ENCODE measurements at regions of chr1 and their contacts with region 1.

Region 1: DNA sequence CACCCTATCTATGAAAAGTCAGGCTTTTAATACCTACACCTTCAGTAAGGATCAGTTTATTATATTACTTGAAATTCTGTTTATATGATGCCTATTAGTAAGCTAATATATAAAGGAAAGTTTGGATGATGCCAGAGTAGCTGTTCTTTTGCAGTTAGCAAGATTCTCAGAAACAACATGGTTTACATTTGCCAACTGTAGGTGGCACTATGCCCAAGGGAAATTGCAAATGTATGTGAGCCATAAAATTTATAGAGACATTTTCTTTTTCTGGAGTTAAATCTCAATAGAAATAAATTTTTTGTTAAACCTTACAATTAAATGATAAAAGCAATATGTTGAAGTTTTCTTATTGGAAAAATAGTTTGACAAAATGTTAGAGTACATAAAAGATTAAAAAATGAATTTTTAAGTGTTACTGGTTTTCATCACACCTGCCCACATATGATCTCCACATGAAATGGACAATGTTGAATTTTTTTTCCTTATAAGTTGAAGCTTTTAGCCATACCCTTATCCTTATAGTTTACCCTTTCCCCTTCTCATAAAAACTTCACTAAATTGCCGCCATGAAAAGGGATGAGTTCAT is 32.1 kb upstream of the EPHX4 start:
- DNase-seq: peak; percentile 57
- ATAC-seq: peak; percentile 42
- H3K4me3 Mint-ChIP-seq: no peak overlapping the region
- H3K27ac Mint-ChIP-seq: no peak overlapping the region
- H3K4me1 Mint-ChIP-seq: no peaks in the 10 kb centered on the region
- H3K27me3 Mint-ChIP-seq: peaks cover 1% of the 10 kb centered on the region
- CTCF ChIP-seq: peak; percentile 68

Region 2: GRCh38 chr1:92016720-92017316 is 19.1 kb after region 1 on chr1:
- CTCF ChIA-PET with region 1: interaction called, 16 read pairs
- POLR2A ChIA-PET with region 1: no interaction called
- intact Hi-C with region 1: no loop called
- DNase-seq: no peak
- ATAC-seq: no peak
- H3K4me3 Mint-ChIP-seq: no peak overlapping the region
- H3K27ac Mint-ChIP-seq: no peak overlapping the region
- H3K4me1 Mint-ChIP-seq: peaks cover 14% of the 10 kb centered on the region
- H3K27me3 Mint-ChIP-seq: peaks cover 1% of the 10 kb centered on the region
- CTCF ChIP-seq: no peak

Region 3: GRCh38 chr1:92038695-92039346 is 41.1 kb after region 1 on chr1:
- CTCF ChIA-PET with region 1: no interaction called
- POLR2A ChIA-PET with region 1: no interaction called
- intact Hi-C with region 1: no loop called
- DNase-seq: no peak
- ATAC-seq: no peak
- H3K4me3 Mint-ChIP-seq: no peak overlapping the region
- H3K27ac Mint-ChIP-seq: no peak overlapping the region
- H3K4me1 Mint-ChIP-seq: no peaks in the 10 kb centered on the region
- H3K27me3 Mint-ChIP-seq: peaks cover 2% of the 10 kb centered on the region
- CTCF ChIP-seq: no peak

Region 4: DNA sequence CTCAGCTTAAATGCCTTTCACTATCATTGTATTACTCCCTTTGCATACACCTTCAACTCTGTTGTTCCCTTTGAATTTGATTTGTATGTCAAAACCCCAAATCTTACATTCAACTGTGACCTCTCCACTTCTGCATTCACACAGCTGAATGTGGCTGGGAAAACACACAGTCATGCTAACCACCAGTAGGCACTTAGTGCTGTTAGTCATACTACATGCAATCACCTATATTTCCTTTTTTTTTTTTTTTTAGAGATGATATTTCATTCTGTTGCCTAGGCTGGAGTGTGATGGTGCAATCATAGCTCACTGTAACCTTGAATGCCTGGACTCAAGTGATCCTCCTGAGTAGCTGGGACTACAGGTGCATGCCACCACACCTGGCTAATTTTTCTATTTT is 98.6 kb after region 1 on chr1:
- CTCF ChIA-PET with region 1: no interaction called
- POLR2A ChIA-PET with region 1: no interaction called
- intact Hi-C with region 1: no loop called
- DNase-seq: no peak
- ATAC-seq: peak; percentile 60
- H3K4me3 Mint-ChIP-seq: no peak overlapping the region
- H3K27ac Mint-ChIP-seq: no peak overlapping the region
- H3K4me1 Mint-ChIP-seq: no peaks in the 10 kb centered on the region
- H3K27me3 Mint-ChIP-seq: no peaks in the 10 kb centered on the region
- CTCF ChIP-seq: no peak

Region 5: DNA sequence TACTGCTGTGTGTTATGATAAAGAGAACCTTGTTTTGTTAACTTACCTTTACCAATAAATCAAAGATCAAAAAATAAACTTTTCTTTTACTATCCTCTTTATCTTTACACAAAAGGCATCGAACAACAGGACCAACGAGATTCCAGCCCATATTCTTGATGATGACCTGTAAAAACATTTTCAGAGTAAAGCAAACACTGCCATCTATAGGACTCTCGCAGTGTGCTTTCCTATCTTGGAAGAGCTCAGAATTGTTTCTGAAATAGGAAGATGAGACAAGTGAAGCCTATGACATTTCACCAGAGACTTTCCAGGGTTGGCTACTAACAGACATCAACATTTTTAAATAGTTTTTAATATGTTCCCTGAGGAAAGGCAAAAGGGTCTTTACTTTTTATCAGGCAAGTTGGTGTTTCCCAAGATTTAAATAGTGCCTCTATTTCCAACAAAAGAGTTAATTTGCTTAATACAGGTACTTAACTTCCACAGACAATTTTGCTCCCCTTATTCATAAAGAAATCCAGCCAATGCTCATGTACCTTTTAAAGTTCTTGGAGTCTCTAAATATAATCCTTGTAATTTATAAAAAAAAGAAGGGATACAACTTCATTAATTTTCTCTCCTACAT is 293.8 kb after region 1 on chr1:
- CTCF ChIA-PET with region 1: interaction called, 36 read pairs
- POLR2A ChIA-PET with region 1: no interaction called
- intact Hi-C with region 1: loop called (anchors 10 kb)
- DNase-seq: no peak
- ATAC-seq: no peak
- H3K4me3 Mint-ChIP-seq: no peak overlapping the region
- H3K27ac Mint-ChIP-seq: no peak overlapping the region
- H3K4me1 Mint-ChIP-seq: peaks cover 13% of the 10 kb centered on the region
- H3K27me3 Mint-ChIP-seq: no peaks in the 10 kb centered on the region
- CTCF ChIP-seq: peak; percentile 55

Region 6: GRCh38 chr1:92623187-92623778 is 625.6 kb after region 1 on chr1:
- CTCF ChIA-PET with region 1: interaction called, 6 read pairs
- POLR2A ChIA-PET with region 1: no interaction called
- intact Hi-C with region 1: loop called (anchors 5 kb)
- DNase-seq: no peak
- ATAC-seq: no peak
- H3K4me3 Mint-ChIP-seq: no peak overlapping the region
- H3K27ac Mint-ChIP-seq: no peak overlapping the region
- H3K4me1 Mint-ChIP-seq: peaks cover 2% of the 10 kb centered on the region
- H3K27me3 Mint-ChIP-seq: no peaks in the 10 kb centered on the region
- CTCF ChIP-seq: peak; percentile 74

Measured in activated CD8-positive, alpha-beta T cell treated with anti-CD3 and anti-CD28 coated beads for 36 hours (primary cell).